A673 (cell line): ENCODE measurements at regions of chr7 and their contacts with region 1.

Region 1: DNA sequence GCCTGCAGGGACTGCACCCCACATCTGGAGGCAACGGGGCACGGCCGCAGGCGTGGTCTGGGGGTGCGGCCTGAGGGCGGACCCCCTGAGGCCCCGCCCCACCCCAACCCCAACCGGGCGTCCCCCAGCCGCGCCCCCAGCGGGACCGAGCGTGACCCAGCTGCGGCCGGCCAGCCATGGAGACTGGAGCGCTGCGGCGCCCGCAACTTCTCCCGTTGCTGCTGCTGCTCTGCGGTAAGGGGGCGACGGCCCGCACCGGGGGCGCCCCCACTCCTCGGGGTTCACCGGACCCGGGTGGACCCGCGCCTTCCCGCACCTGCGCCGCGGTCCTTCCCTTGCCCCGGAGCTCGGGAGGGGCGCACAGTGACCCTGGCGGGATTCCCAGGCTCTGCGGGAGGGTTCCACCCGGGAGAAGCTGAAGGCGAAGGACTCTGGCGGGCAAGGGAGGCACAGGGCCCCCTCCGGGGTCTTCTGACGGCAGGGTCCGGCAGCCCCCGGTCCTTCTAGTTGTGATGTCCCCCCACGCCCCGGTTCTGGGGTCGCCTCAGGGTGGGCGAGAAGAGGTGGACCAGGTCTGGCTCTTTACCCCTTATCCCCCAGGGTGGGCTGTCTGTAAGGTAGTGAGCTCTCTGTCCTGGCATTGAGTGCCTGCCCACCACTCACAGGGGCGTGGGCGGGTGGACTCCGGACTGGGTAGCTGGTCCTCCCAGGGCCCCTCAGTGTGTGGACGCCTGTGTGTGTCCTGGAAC is at the start of gene RAMP3:
- DNase-seq: no peak
- H3K4me3 ChIP-seq: no peak within 1 kb of the TSS
- H3K27ac ChIP-seq: no peak within 1 kb of the TSS
- H3K4me1 ChIP-seq: no peaks in the 10 kb centered on the region
- H3K27me3 ChIP-seq: peaks cover 35% of the 10 kb centered on the region
- CTCF ChIP-seq: no peak
- total RNA-seq, gene RAMP3: not detected in 2 replicates

Region 2: GRCh38 chr7:44307301-44307900 is 850.4 kb before region 1 on chr7:
- CTCF ChIA-PET with region 1: no interaction called
- POLR2A ChIA-PET with region 1: no interaction called
- intact Hi-C with region 1: no loop called
- DNase-seq: peak; percentile 66
- H3K4me3 ChIP-seq: no peak overlapping the region
- H3K27ac ChIP-seq: no peak overlapping the region
- H3K4me1 ChIP-seq: no peaks in the 10 kb centered on the region
- H3K27me3 ChIP-seq: peaks cover 14% of the 10 kb centered on the region
- CTCF ChIP-seq: peak; percentile 48

Region 3: GRCh38 chr7:45145881-45146280 is 11.9 kb before region 1 on chr7:
- CTCF ChIA-PET with region 1: no interaction called
- POLR2A ChIA-PET with region 1: interaction called, 12 read pairs
- intact Hi-C with region 1: no loop called
- DNase-seq: no peak
- H3K4me3 ChIP-seq: no peak overlapping the region
- H3K27ac ChIP-seq: no peak overlapping the region
- H3K4me1 ChIP-seq: no peaks in the 10 kb centered on the region
- H3K27me3 ChIP-seq: peaks cover 4% of the 10 kb centered on the region
- CTCF ChIP-seq: no peak

Region 4: DNA sequence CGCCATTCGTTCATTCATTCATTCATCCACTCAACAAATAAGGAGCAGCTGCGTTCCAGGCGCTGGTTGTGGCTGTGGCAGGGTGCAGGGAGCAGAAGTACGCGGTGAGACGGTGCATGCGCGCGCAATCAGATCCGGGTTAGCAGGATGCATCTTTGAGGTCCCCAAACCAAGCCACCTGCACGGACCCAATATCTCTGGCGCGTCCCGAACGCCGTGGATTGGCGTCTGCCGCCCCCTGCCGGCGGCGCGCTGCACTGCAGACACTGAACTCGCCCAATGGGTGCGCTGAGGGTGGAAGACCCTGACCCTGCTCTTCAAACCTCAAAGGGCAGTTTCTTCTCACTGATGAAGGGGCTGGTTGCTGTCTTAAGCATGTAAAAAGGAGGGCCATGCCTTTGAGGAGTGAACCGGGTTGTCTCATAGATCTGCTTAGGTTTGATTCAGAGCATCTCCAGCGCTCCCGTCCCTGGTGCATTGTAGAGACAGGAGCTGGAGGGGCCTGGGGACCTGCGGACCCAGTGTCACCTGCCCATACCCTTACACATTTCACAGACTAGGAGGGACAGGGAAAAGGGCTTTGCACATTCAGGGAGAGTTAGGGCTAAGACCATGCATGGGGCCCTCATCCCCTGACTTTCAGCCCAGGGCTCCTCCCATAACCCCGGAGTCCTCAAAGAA is 102.3 kb after region 1 on chr7:
- CTCF ChIA-PET with region 1: interaction called, 3 read pairs
- POLR2A ChIA-PET with region 1: no interaction called
- intact Hi-C with region 1: loop called (anchors 1 kb)
- DNase-seq: peak; percentile 57
- H3K4me3 ChIP-seq: no peak overlapping the region
- H3K27ac ChIP-seq: no peak overlapping the region
- H3K4me1 ChIP-seq: no peaks in the 10 kb centered on the region
- H3K27me3 ChIP-seq: peaks cover 6% of the 10 kb centered on the region
- CTCF ChIP-seq: peak; percentile 99

Region 5: GRCh38 chr7:45917658-45918057 is 759.8 kb after region 1 on chr7:
- CTCF ChIA-PET with region 1: no interaction called
- POLR2A ChIA-PET with region 1: no interaction called
- intact Hi-C with region 1: no loop called
- DNase-seq: peak; percentile 78
- H3K4me3 ChIP-seq: no peak overlapping the region
- H3K27ac ChIP-seq: no peak overlapping the region
- H3K4me1 ChIP-seq: peaks cover 3% of the 10 kb centered on the region
- H3K27me3 ChIP-seq: peaks cover 71% of the 10 kb centered on the region
- CTCF ChIP-seq: peak; percentile 93